ENCODE measurements at regions of chr4 and their contacts with region 1.

Region 1: GRCh38 chr4:23368081-23368697 is 521.7 kb downstream of the PPARGC1A start:
- DNase-seq: peak; percentile 17 to 62
- H3K4me3 ChIP-seq: no peak overlapping the region
- H3K27ac ChIP-seq: no peak overlapping the region
- H3K4me1 ChIP-seq: peaks cover 0 to 4% (median 1%) of the 10 kb centered on the region in 4 experiments; a peak in 3 of 7 replicates
- H3K27me3 ChIP-seq: no peaks in the 10 kb centered on the region
- CTCF ChIP-seq: peak; percentile 61 to 89 (median 74)
- EP300 ChIP-seq: no peak
- POLR2A ChIP-seq: no peak
- RAD21 ChIP-seq: peak; percentile 96 to 97

Region 2: DNA sequence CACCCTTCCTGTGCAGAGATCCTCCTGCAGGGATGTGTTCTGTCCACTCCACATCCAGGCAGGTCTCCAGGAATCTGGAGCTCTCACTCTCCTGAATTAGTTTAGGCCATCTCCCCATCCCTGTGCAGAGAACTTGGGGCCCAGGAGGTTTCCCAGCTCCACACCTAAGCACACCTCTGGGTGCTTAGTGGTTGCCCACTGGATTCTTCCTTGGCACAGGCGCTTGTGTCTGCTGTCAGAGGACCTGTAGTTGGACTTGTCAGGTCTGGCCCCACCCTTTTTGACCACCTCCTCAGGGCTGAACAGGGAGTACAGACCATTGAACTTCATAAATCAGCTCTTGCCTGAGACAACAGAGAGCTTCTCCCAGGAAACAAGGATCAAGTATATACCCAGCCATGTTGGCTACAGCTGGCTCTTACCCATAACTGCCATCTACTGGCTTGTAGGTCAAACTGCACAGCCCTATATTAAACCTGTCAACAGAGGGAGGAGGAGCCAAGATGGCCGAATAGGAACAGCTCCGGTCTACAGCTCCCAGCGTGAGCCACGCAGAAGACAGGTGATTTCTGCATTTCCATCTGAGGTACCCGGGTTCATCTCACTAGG is 246.2 kb after region 1 on chr4:
- CTCF ChIA-PET with region 1: interaction called, 17 read pairs
- POLR2A ChIA-PET with region 1: no interaction called
- DNase-seq: peak; percentile 5 to 45
- H3K4me3 ChIP-seq: no peak overlapping the region
- H3K27ac ChIP-seq: no peak overlapping the region
- H3K4me1 ChIP-seq: no peaks in the 10 kb centered on the region
- H3K27me3 ChIP-seq: no peaks in the 10 kb centered on the region
- CTCF ChIP-seq: peak in 2 of 3 experiments; percentile 55 to 56; a peak in 3 of 4 replicates
- EP300 ChIP-seq: no peak
- POLR2A ChIP-seq: no peak
- RAD21 ChIP-seq: peak; percentile 68 to 77

Region 3: GRCh38 chr4:23717528-23718248 is 349.5 kb after region 1 on chr4:
- CTCF ChIA-PET with region 1: interaction called, 22 read pairs
- POLR2A ChIA-PET with region 1: no interaction called
- DNase-seq: no peak
- H3K4me3 ChIP-seq: no peak overlapping the region
- H3K27ac ChIP-seq: no peak overlapping the region
- H3K4me1 ChIP-seq: no peaks in the 10 kb centered on the region
- H3K27me3 ChIP-seq: no peaks in the 10 kb centered on the region
- CTCF ChIP-seq: peak in 2 of 3 experiments; percentile 40 to 41; a peak in 3 of 4 replicates
- EP300 ChIP-seq: no peak
- POLR2A ChIP-seq: no peak
- RAD21 ChIP-seq: peak; percentile 47 to 48

Region 4: DNA sequence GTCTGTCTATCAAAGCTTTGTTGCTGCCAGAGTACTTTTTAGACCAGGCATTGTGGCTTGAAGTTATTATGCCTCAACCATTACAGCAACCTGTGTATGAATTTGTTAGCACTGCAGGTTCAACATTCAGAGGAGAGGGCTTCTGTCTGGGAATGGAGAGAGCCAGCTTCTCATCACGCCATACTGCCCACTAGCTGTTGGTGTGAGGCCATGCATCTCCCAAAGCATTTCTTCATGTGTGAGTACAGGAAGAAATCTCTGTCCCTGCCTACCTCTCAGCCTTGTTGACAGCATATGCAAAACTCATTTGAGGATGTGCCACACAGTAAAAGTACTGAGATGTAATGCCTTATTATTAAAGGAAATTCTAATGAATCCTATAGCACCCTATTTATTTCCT is 598.5 kb after region 1 on chr4:
- CTCF ChIA-PET with region 1: interaction called, 11 read pairs
- POLR2A ChIA-PET with region 1: no interaction called
- DNase-seq: no peak
- H3K4me3 ChIP-seq: no peak overlapping the region
- H3K27ac ChIP-seq: no peak overlapping the region
- H3K4me1 ChIP-seq: peaks cover 0 to 2% (median 0%) of the 10 kb centered on the region in 4 experiments; a peak in 2 of 7 replicates
- H3K27me3 ChIP-seq: no peaks in the 10 kb centered on the region; a peak in 1 of 7 replicates
- CTCF ChIP-seq: peak; percentile 57 to 90 (median 80)
- EP300 ChIP-seq: no peak
- POLR2A ChIP-seq: no peak
- RAD21 ChIP-seq: peak; percentile 72 to 77